ENCODE measurements at regions of chr17 and their contacts with region 1.

Region 1: GRCh38 chr17:19260958-19261357 is 23.8 kb downstream of the EPN2 start:
- DNase-seq: peak; percentile 12
- H3K4me3 ChIP-seq: no peak overlapping the region
- H3K27ac ChIP-seq: no peak overlapping the region
- H3K4me1 ChIP-seq: peaks cover 37% of the 10 kb centered on the region
- H3K27me3 ChIP-seq: no peaks in the 10 kb centered on the region
- CTCF ChIP-seq: peak; percentile 8
- POLR2A ChIP-seq: no peak

Region 2: GRCh38 chr17:18946531-18946930 is 314.4 kb before region 1 on chr17:
- CTCF ChIA-PET with region 1: no interaction called
- POLR2A ChIA-PET with region 1: no interaction called
- dilution Hi-C with region 1: no loop called
- intact Hi-C with region 1: no loop called
- DNase-seq: no peak
- H3K4me3 ChIP-seq: no peak overlapping the region
- H3K27ac ChIP-seq: no peak overlapping the region
- H3K4me1 ChIP-seq: no peaks in the 10 kb centered on the region
- H3K27me3 ChIP-seq: peaks cover 19 to 29% of the 10 kb centered on the region in 2 experiments
- CTCF ChIP-seq: no peak
- POLR2A ChIP-seq: no peak

Region 3: DNA sequence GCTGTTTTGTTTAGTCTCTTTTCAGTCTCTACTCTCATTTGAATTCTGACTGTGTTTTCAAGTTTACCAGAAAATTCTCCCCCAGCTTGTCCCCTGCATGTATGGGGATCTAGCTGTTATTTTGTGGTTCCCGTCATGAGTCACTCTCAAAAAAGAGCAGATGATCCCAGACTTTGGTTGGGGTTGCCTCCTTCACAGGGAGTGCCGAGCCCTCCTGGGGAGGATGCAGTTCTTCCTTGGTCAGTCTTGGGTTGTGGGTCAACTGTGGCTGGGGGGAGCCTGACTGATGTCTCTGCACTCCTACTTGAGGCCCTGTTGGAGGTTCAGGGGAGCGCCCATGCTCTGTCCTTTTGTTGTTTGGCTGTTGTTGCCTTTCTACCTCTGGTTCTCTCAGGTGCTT is 13.9 kb after region 1 on chr17:
- CTCF ChIA-PET with region 1: interaction called, 4 read pairs
- POLR2A ChIA-PET with region 1: no interaction called
- dilution Hi-C with region 1: no loop called
- intact Hi-C with region 1: loop called (anchors 1 kb)
- DNase-seq: no peak
- H3K4me3 ChIP-seq: no peak overlapping the region
- H3K27ac ChIP-seq: no peak overlapping the region
- H3K4me1 ChIP-seq: no peaks in the 10 kb centered on the region
- H3K27me3 ChIP-seq: no peaks in the 10 kb centered on the region
- CTCF ChIP-seq: no peak
- POLR2A ChIP-seq: no peak

Region 4: DNA sequence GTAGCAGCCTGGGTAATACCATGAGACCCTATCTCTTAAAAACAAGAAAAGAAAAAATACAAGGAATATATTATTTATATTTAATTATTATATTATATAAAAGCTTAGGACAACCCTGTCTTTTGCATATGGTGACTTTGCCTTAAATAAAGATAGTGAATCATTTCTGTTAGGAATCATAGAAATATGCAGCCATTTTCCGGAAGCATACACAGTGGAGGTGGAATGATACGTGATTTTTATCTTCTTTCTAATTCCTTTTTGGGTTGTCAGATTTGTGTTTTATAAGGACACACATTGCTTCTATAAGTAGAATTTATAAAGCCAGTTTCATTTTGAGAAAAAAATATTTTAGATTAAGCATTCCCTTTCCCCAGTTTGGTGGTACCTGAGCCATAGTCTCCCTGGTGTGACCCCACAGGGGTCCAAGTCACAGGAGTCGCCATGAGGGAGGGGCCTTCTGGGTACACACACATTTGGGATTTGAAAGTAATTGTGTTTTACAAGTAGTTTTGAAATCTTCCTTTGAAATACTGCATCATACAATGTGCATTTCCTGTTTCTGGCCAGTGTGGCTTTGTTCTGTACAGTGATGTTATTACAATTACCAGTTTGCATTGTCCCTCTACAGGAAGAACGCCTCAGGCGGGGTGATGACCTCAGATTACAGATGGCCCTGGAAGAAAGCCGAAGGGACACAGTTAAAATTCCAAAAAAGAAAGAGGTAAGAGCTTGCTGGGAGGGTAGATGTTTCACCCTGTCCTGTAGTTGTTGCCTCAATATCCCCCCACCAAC is 50.7 kb after region 1 on chr17:
- CTCF ChIA-PET with region 1: no interaction called
- POLR2A ChIA-PET with region 1: no interaction called
- dilution Hi-C with region 1: no loop called
- intact Hi-C with region 1: loop called (anchors 1 kb)
- DNase-seq: peak; percentile 79
- H3K4me3 ChIP-seq: peak overlapping the region in 1 of 3 experiments; percentile 2
- H3K27ac ChIP-seq: peak overlapping the region; percentile 98
- H3K4me1 ChIP-seq: peaks cover 22% of the 10 kb centered on the region
- H3K27me3 ChIP-seq: no peaks in the 10 kb centered on the region
- CTCF ChIP-seq: no peak
- POLR2A ChIP-seq: no peak

Region 5: DNA sequence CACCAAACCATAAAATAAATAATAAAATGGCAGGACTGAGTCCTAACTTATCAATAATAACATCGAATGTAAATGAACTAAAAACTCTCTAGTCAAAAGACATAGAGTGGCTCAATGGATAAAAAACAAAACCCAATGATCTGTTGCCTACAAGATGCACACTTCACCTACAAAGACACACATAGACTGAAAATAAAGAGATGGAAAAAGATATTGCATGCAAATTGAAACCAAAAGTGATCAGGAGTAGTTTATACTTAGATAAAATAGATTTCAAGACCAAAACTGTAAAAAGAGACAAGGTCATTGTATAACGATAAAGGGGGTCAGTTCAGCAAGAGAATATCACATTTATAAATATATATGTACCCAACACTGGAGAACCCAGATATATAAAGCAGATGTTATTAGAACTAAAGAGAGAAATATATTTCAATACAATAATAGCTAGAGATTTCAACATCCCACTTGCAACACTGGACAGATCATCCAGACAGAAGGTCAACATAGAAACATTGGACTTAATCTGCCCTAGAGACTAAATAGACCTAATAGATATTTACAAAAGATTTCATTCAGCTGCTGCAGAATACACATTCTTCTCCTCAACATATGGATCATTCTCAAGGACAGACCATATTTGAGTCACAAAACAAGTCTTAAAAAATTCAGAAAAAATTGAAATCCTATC is 425.6 kb after region 1 on chr17:
- CTCF ChIA-PET with region 1: no interaction called
- POLR2A ChIA-PET with region 1: no interaction called
- dilution Hi-C with region 1: no loop called
- intact Hi-C with region 1: no loop called
- DNase-seq: no peak
- H3K4me3 ChIP-seq: no peak overlapping the region
- H3K27ac ChIP-seq: no peak overlapping the region
- H3K4me1 ChIP-seq: no peaks in the 10 kb centered on the region
- H3K27me3 ChIP-seq: no peaks in the 10 kb centered on the region
- CTCF ChIP-seq: no peak
- POLR2A ChIP-seq: no peak